ENCODE measurements at regions of chr5 and their contacts with region 1.

Region 1: DNA sequence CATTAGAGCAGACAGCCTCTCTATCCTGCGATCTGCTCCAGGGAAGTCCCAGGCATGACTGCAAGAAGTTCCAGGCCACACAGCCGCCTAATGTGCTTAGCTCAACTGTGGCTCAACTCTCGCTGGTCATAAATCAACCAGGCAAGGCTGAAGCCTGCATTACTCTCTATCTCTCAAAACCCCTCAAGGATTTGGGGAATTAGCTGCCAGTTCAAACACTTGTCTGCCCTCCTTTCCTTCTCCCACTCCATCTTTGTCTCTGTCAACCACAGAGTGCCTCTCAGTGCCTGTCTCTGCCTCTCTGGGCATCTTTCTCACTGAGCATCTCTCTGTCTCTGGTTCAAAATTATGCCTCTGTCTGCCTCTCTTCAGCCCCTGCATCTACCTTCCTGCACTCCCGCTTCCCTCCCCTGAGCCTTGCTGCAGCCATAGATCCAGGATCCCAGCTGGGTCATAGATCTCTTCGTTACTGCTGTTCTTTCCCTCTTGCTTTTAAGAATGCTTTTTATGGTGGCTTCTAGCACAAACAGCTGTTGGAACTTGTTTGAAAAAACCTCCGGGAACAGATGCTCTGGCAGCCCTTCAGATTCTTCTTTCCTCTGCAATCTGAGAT is 27.9 kb upstream of the GALNT10 start:
- DNase-seq: no peak
- H3K4me3 ChIP-seq: no peak overlapping the region
- H3K27ac ChIP-seq: no peak overlapping the region
- H3K4me1 ChIP-seq: no peaks in the 10 kb centered on the region; the same call in 1 of the 2 replicates
- H3K27me3 ChIP-seq: no peaks in the 10 kb centered on the region; the same call in 1 of the 2 replicates
- CTCF ChIP-seq: no peak

Region 2: DNA sequence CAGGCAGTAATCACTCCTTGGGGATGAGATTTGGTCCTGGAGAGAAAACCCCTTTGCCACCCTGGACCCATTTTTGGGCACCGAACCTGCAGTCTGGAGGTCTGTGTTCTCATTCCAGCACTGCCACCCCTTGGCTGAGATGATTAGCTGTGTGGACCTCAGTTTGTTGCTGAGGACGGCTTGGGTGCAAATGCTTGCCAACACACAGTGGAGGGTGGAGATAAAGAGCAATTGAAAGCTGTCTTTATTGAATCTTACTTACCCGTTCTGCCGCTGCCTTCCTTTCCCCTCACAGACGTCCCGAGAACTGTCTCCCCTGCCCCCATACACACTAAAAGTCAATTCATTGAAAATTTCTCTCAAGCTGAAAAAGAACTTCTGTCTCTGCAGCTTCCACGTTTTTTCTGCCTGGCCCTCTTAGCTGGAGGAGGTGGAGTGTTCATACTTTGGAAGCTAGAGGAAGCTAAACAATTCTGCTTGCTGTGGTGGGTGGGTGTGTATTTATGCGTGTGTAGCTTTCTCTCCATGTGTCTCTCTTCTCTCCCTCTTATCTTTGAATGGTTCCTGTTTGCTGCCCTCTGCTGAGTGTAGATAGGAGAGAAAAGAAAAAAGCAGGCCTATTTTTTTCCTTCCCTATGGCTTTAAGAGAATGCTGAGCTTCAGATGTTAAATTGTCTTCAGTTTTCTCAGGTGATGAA is 34.5 kb after region 1 on chr5:
- CTCF ChIA-PET with region 1: no interaction called
- POLR2A ChIA-PET with region 1: no interaction called
- intact Hi-C with region 1: no loop called
- DNase-seq: peak in 1 of 2 experiments; percentile 50
- H3K4me3 ChIP-seq: peak overlapping the region; percentile 0; the same call in 1 of the 2 replicates
- H3K27ac ChIP-seq: peak overlapping the region; percentile 66
- H3K4me1 ChIP-seq: peaks cover 77% of the 10 kb centered on the region
- H3K27me3 ChIP-seq: no peaks in the 10 kb centered on the region
- CTCF ChIP-seq: peak; percentile 46; the same call in 1 of the 2 replicates

Region 3: DNA sequence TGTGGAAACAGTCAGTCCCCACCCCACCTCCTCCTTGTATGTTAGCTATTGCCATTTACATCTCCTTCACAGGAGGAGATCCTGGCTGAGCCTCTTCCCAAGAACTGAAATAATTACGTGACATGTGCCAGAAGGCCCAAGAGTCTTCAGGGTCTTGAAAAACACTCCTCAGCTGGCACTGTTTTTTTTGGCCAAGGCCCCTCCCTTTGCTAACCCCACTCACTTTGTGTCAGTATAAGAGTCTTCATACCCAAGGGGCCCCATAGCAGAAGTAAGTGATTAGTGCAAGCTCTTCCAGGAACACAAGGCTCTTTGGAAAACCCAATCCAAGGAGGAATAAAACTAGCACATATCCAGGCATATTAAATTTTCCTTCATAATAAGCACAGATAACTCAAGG is 586.8 kb after region 1 on chr5:
- CTCF ChIA-PET with region 1: no interaction called
- POLR2A ChIA-PET with region 1: no interaction called
- intact Hi-C with region 1: loop called (anchors 5 kb)
- DNase-seq: no peak
- H3K4me3 ChIP-seq: no peak overlapping the region
- H3K27ac ChIP-seq: no peak overlapping the region
- H3K4me1 ChIP-seq: peaks cover 14% of the 10 kb centered on the region
- H3K27me3 ChIP-seq: no peaks in the 10 kb centered on the region
- CTCF ChIP-seq: no peak